Activated CD8-positive, alpha-beta memory T cell treated with anti-CD3 and anti-CD28 coated beads, Interleukin-2, amount 10 ng/mL, durations not matched to agents 7 days and 5 days (primary cell): ENCODE measurements at regions of chr19 and their contacts with region 1.

Region 1: DNA sequence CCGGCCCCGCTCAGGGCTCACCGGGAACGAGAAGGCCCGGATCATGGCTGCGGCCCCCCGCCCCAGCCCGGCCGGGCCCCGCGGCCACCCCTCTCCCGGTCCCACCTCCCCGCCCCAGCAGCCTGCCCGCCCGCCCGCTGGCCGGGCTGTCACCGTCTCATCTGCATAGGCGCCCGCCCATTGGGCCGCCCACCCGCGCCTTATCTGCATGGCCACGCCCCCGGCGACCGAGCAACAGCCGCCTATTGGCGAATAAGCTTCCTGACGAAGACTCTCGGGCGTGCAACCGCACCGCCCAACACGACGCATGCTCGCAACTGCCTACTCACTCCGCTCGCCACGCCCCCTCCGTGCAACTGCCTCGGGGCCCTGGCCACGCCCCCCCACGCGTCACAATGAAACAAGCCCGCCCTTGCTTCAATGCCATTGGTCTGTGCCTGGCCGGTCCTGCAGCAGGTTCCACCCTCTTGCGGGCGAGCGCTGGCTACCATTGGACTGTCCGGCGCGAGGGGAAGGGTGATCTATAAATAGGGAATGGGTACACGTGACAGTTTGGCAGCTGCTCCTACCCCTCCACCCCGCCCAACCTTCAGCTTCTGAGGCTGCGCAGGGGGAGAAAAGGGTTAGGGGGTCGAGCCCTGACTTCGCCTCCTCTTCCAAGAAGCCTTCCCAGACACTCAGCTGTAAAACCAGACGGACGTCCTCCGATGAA is at the start of gene DACT3:
- DNase-seq: peak; percentile 100
- ATAC-seq: peak; percentile 94
- H3K4me3 Mint-ChIP-seq: peak within 1 kb of the TSS; percentile 67
- H3K27ac Mint-ChIP-seq: peak within 1 kb of the TSS; percentile 76
- H3K4me1 Mint-ChIP-seq: peaks cover 17% of the 10 kb centered on the region
- H3K27me3 Mint-ChIP-seq: peaks cover 37% of the 10 kb centered on the region
- total RNA-seq, gene DACT3: 0.12 to 1.2 TPM

Region 2: DNA sequence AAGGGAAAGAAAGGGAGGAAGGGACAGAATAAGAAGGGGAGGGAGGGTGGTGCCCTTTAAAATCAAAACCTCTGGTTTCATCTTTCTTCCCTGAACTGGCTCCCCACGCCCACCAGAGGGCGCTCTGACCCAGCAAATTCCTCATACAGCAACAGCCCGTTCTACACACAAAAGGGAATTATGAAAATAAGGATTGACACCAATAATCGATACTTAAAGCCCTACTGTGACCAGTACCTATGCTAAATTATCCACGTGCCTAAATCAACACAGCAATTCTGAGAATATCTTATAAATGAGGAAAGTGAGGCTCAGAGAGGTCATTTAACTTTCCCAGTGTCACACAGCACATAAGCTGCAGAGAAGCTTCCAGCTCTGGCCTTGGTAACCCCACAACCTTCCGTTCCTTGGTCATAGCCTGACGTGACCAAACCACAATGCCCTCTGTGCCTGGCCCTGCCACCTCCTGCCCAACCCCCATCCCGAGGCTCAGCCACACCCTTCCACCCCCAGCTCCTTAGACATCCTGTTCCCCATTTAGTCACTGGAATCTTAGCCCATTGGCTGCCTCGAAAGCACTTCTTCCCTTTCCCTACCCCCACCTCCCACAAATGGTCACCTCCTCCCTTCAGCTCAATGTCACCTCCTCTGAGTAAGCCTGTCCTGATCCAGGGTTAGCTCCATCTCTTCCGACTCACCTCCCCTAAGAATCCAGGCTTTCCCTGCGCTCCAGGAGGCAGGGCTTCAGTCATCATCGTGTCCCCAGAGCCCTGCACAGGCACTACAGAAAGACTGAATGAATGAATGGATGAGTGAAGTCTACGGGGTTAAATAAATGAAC is 131.3 kb before region 1 on chr19:
- CTCF ChIA-PET with region 1: interaction called, 40 read pairs
- DNase-seq: peak; percentile 73
- ATAC-seq: peak; percentile 73
- H3K4me3 Mint-ChIP-seq: no peak overlapping the region
- H3K27ac Mint-ChIP-seq: no peak overlapping the region
- H3K4me1 Mint-ChIP-seq: peaks cover 11% of the 10 kb centered on the region
- H3K27me3 Mint-ChIP-seq: peaks cover under 1% of the 10 kb centered on the region

Region 3: DNA sequence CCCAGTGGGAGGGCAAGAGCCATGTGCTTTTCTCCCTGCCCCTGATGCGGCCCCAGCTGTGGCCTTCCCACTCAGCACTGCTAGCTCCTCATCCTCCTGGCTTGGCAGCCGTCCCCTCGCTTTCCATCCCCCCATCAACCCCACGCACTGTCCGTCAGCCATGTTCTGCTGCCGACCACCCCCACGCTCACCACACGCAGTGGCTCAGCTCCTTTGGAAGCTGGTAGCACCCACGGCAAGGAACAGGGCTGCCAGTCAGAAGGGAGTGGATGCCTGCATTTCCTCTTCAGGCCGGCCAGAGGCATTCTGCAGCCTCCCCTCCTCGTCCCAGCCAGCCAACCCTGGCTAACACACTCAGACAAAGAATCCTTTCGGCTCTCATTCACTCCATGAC is 53.7 kb before region 1 on chr19:
- CTCF ChIA-PET with region 1: interaction called, 169 read pairs
- DNase-seq: no peak
- ATAC-seq: no peak
- H3K4me3 Mint-ChIP-seq: no peak overlapping the region
- H3K27ac Mint-ChIP-seq: no peak overlapping the region
- H3K4me1 Mint-ChIP-seq: peaks cover 51% of the 10 kb centered on the region
- H3K27me3 Mint-ChIP-seq: no peaks in the 10 kb centered on the region

Region 4: GRCh38 chr19:46634045-46634655 is 27.0 kb before region 1 on chr19:
- CTCF ChIA-PET with region 1: interaction called, 27 read pairs
- DNase-seq: peak; percentile 96
- ATAC-seq: peak; percentile 73
- H3K4me3 Mint-ChIP-seq: peak overlapping the region; percentile 47
- H3K27ac Mint-ChIP-seq: no peak overlapping the region
- H3K4me1 Mint-ChIP-seq: peaks cover 17% of the 10 kb centered on the region
- H3K27me3 Mint-ChIP-seq: peaks cover 31% of the 10 kb centered on the region

Region 5: DNA sequence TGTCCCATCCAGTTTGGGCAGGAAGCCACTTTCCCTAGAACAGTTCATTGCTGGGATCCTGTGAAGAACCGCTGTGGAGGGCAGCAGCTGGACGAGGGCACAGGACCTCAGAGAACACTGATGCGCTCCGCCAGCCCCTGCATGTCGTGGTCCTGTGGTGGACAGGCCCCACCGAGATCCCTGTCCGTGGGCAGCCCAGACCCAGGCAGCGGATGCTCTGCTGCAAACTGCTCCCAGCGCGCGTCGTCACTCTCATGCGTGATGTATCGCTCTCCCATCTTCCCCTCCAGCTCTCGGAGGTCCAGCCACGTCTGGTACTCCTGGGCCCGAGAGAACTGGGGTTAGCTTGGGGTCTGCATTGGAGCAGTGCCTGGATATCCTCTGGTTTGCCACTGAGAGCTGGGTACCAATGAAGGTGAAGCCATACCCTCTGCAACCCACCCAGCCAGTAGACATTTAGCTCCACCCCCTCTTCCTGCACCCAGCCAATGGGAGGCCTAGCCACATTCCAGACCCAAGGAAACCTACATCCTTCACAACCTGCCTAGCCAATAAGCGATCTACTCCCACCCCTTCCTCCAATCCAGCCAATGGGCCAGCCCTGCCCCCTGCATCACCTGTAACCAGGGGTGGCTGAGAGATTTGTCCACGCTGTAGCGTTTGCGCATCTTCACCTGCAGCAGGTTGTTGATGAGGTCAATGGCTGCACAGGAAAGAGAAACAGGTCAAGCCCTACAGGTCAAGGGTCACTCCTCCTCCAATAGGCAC is 13.4 kb after region 1 on chr19:
- CTCF ChIA-PET with region 1: interaction called, 11 read pairs
- DNase-seq: no peak
- ATAC-seq: no peak
- H3K4me3 Mint-ChIP-seq: no peak overlapping the region
- H3K27ac Mint-ChIP-seq: no peak overlapping the region
- H3K4me1 Mint-ChIP-seq: peaks cover 15% of the 10 kb centered on the region
- H3K27me3 Mint-ChIP-seq: no peaks in the 10 kb centered on the region

Region 6: GRCh38 chr19:46728693-46729676 is 67.8 kb after region 1 on chr19:
- CTCF ChIA-PET with region 1: interaction called, 14 read pairs
- DNase-seq: peak; percentile 85
- ATAC-seq: peak; percentile 94
- H3K4me3 Mint-ChIP-seq: no peak overlapping the region
- H3K27ac Mint-ChIP-seq: peak overlapping the region; percentile 31
- H3K4me1 Mint-ChIP-seq: peaks cover 24% of the 10 kb centered on the region
- H3K27me3 Mint-ChIP-seq: no peaks in the 10 kb centered on the region